Aorta (tissue), 5 donors: ENCODE measurements at regions of chr17 and their contacts with region 1.

Region 1: DNA sequence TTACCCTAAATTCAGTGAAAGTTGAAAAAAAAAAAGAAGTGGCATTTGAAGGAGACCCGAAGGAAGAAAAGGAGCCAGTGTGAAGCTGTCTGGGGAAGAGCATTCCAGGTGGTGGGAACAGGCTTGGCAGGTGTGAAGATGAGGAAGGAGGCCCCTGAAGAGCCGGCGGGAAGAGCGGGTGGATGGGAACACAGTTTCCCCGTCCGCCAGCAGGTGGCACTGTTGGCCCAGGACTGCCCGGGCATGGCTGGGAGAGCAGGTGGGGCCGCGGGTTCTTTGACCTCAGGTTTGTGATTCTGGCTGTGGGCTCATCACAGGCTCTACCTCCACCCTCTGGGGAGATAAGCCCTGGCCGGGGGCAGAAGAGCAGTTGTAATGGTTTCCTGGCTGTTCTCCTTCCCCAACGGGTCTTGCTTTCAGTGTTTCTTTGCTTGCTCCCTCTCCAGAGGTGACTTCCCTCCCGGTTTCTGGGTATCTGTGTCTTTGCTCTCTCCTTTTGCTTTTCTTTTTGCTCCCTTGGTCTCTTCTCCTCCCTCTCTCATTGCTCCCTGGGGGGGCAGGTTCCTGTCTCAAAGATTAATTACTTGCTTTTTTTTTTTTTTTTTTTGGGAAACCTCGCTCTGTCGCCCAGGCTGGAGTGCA is 32.3 kb downstream of the RAP1GAP2 start:
- DNase-seq: peak; percentile 76 to 92
- ATAC-seq: peak; percentile 70
- H3K4me3 ChIP-seq: no peak overlapping the region
- H3K27ac ChIP-seq: no peak overlapping the region
- H3K4me1 ChIP-seq: no peaks in the 10 kb centered on the region
- H3K27me3 ChIP-seq: no peaks in the 10 kb centered on the region

Region 2: DNA sequence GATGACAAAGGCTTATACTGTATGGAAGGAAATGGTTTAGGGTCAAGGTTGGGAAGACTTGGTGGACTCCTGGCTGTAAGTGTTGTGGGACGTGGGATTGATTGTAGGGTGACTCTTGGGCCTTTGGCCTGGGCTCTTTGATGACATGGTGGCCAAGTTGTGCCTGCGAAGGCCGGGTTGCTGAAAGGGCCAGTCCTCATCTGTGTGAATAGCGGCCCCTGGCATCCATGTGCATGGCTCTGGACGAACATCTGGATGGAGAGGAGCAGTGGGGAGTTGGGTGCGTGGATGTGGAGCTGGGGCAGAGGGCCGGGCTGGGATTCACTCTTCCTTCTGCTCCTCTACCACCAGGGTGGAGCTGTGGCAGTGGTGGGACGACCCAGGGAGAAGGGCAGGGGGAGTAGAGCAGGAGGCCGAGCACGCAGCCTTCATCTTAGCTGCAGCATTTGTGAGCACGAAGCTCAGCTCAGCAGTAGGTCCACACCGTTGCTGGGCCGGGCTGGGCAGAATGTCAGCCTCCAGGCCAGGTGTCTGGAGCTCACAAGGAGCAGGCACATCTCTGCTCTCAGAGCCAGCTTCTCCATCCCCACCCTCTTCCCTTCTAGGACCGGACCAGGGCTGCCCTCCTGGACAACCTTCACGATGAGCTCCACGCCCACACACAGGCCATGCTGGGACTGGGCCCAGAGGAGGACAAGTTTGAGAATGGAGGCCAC is 179.0 kb after region 1 on chr17:
- intact Hi-C with region 1: loop called (anchors 2 to 5 kb)
- DNase-seq: peak in 1 of 2 donors; percentile 36
- ATAC-seq: no peak
- H3K4me3 ChIP-seq: no peak overlapping the region
- H3K27ac ChIP-seq: no peak overlapping the region
- H3K4me1 ChIP-seq: no peaks in the 10 kb centered on the region
- H3K27me3 ChIP-seq: no peaks in the 10 kb centered on the region

Region 3: DNA sequence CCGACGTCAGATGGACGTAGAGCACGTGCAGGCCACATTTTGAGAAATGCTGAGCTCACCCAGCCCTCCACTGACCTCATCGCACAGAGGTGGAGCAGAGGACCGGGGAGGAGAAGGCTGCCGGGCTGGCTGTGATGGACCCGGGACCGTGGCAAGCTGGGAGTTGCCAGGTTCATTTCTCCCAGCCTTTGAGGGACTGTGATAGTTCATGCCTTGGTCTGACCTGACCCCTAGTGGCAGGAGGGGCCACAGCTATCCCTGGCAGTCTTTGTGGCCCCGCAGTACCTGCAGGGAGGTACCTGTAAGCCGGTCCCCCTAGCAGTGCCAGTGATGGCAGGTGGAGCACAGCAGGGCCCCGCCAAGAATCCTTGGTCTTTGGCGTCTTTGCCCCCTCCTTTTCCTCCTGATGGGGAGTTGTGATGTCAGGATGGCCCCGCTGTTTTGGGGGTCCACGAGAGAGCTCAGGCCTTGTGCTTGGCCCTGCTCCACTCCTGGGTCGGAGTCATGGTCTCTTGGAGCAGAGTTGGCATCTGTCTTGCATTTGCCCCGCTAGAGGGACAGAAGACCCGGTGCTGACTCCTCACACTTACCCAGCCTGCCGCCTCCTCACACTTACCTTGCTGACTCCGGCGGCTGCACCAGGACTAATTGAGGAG is 184.5 kb after region 1 on chr17:
- intact Hi-C with region 1: loop called (anchors 2 to 5 kb)
- DNase-seq: peak; percentile 76 to 81
- ATAC-seq: peak; percentile 84
- H3K4me3 ChIP-seq: no peak overlapping the region
- H3K27ac ChIP-seq: no peak overlapping the region
- H3K4me1 ChIP-seq: no peaks in the 10 kb centered on the region
- H3K27me3 ChIP-seq: no peaks in the 10 kb centered on the region